Common myeloid progenitor, CD34-positive (primary cell): ENCODE measurements at regions of chr10 and their contacts with region 1.

Region 1: GRCh38 chr10:6580279-6581029 is 378 bp upstream of the PRKCQ start:
- DNase-seq: peak; percentile 82 to 88 (median 87)
- H3K4me3 ChIP-seq: peak overlapping the region; percentile 84 to 99 (median 90)
- H3K27ac ChIP-seq: peak overlapping the region; percentile 72 to 91
- H3K4me1 ChIP-seq: peaks cover 23 to 50% (median 41%) of the 10 kb centered on the region in 4 experiments
- H3K27me3 ChIP-seq: no peaks in the 10 kb centered on the region

Region 2: GRCh38 chr10:6542999-6543430 is 37.4 kb before region 1 on chr10:
- CTCF ChIA-PET with region 1: interaction called, 10 read pairs
- POLR2A ChIA-PET with region 1: no interaction called
- DNase-seq: peak; percentile 49 to 87 (median 79)
- H3K4me3 ChIP-seq: peak overlapping the region in 6 of 7 experiments; percentile 0 to 65 (median 52)
- H3K27ac ChIP-seq: peak overlapping the region; percentile 73 to 88
- H3K4me1 ChIP-seq: peaks cover 15 to 47% (median 36%) of the 10 kb centered on the region in 4 experiments
- H3K27me3 ChIP-seq: no peaks in the 10 kb centered on the region

Region 3: DNA sequence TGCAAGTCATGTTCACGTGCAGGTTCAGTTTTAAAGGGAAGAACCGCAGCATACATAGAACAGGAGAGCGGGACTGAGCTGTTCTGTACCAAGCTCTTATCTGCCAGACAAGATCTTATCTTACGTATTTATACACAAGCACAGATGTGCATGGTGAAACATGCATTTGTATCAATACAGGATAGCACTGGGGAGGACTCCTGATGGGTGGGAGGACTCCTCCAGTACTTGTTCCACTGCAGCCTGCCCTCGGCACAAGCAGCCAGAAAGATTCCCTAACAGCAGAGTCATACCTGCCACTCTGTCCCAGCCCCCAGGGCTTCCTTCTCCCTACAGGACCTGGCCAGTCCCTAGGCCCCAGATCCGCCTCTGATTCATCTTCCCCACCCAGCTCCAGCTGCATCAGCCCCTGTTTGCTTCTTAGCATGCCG is 12.8 kb after region 1 on chr10:
- CTCF ChIA-PET with region 1: interaction called, 14 read pairs
- POLR2A ChIA-PET with region 1: interaction called, 4 read pairs
- DNase-seq: no peak
- H3K4me3 ChIP-seq: no peak overlapping the region
- H3K27ac ChIP-seq: no peak overlapping the region
- H3K4me1 ChIP-seq: peaks cover 6 to 21% (median 13%) of the 10 kb centered on the region in 4 experiments
- H3K27me3 ChIP-seq: no peaks in the 10 kb centered on the region